IMR-90 (cell line): ENCODE measurements at regions of chr20 and their contacts with region 1.

Region 1: GRCh38 chr20:15232243-15232642 is 894.8 kb upstream of the FLRT3 start:
- DNase-seq: no peak
- ATAC-seq: no peak
- H3K4me3 ChIP-seq: no peak overlapping the region
- H3K27ac ChIP-seq: no peak overlapping the region
- H3K4me1 ChIP-seq: no peaks in the 10 kb centered on the region
- H3K27me3 ChIP-seq: no peaks in the 10 kb centered on the region
- CTCF ChIP-seq: no peak
- POLR2A ChIP-seq: no peak
- RAD21 ChIP-seq: no peak

Region 2: GRCh38 chr20:15328084-15328483 is 95.8 kb after region 1 on chr20:
- CTCF ChIA-PET with region 1: no interaction called
- POLR2A ChIA-PET with region 1: no interaction called
- dilution Hi-C with region 1: no loop called
- in situ Hi-C with region 1: no loop called
- intact Hi-C with region 1: loop called (anchors 5 kb)
- DNase-seq: no peak
- ATAC-seq: no peak
- H3K4me3 ChIP-seq: no peak overlapping the region
- H3K27ac ChIP-seq: no peak overlapping the region
- H3K4me1 ChIP-seq: no peaks in the 10 kb centered on the region
- H3K27me3 ChIP-seq: no peaks in the 10 kb centered on the region
- CTCF ChIP-seq: no peak
- POLR2A ChIP-seq: no peak
- RAD21 ChIP-seq: no peak